ENCODE measurements at regions of chr2 and their contacts with region 1.

Region 1: DNA sequence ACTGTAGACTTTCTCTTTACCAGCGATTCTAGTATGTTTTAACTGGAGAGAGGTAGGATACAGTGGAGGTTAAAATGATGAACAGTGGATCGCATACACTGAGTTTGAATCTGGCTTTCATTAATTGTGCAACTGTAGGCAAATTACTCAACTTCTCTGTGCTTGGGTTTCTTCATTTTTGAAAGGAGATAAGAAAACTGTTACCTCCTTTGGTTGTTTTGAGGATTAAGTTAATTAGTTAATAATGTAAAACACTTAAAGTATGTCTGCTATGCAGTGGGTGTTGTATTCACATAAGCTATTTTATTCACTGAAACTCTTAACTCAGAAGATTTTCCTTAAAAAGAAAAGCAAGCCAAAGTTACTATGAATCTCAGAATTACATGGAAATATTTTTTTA is 111.8 kb upstream of the CYP20A1 start:
- DNase-seq: no peak
- H3K4me3 ChIP-seq: no peak overlapping the region
- H3K27ac ChIP-seq: no peak overlapping the region
- H3K27me3 ChIP-seq: no peaks in the 10 kb centered on the region
- CTCF ChIP-seq: no peak

Region 2: DNA sequence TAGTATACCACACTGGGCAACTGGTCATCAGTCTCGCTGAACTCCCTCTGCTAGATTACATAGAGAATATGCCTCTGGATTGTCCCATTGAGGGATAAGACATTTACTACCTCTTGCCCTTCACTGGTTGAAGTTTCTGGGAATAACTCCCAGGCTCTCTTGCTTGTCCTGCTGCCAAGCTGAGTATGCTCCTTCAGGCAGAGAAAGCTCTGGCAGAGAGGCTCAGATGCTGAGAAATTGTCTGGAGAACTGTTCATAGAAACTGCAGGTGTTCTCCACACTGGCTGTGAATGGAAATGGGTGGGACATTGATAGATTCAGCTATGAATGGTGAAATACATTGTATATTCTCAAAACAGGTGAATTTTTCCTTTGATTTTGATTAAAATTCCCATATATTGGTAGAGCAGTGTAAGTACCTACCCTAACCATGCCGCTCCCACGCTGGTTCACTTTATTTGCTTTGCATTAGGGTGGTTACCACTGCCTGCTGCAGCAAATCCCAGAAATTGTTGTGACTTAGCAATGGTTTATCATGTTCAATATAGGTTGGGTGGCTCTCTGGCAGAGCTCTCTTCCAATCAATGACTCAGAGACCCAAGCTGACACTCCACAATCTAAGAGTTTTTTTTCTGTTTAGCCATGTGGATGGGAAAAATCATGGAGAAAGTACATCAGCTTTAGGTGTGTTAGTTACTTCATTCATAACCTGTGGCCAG is 455.5 kb before region 1 on chr2:
- CTCF ChIA-PET with region 1: no interaction called
- POLR2A ChIA-PET with region 1: no interaction called
- DNase-seq: no peak
- H3K4me3 ChIP-seq: no peak overlapping the region
- H3K27ac ChIP-seq: no peak overlapping the region
- H3K27me3 ChIP-seq: no peaks in the 10 kb centered on the region
- CTCF ChIP-seq: no peak

Region 3: GRCh38 chr2:203195331-203196036 is 68.5 kb after region 1 on chr2:
- CTCF ChIA-PET with region 1: no interaction called
- POLR2A ChIA-PET with region 1: no interaction called
- DNase-seq: no peak
- H3K4me3 ChIP-seq: no peak overlapping the region
- H3K27ac ChIP-seq: no peak overlapping the region
- H3K27me3 ChIP-seq: no peaks in the 10 kb centered on the region
- CTCF ChIP-seq: no peak

Region 4: DNA sequence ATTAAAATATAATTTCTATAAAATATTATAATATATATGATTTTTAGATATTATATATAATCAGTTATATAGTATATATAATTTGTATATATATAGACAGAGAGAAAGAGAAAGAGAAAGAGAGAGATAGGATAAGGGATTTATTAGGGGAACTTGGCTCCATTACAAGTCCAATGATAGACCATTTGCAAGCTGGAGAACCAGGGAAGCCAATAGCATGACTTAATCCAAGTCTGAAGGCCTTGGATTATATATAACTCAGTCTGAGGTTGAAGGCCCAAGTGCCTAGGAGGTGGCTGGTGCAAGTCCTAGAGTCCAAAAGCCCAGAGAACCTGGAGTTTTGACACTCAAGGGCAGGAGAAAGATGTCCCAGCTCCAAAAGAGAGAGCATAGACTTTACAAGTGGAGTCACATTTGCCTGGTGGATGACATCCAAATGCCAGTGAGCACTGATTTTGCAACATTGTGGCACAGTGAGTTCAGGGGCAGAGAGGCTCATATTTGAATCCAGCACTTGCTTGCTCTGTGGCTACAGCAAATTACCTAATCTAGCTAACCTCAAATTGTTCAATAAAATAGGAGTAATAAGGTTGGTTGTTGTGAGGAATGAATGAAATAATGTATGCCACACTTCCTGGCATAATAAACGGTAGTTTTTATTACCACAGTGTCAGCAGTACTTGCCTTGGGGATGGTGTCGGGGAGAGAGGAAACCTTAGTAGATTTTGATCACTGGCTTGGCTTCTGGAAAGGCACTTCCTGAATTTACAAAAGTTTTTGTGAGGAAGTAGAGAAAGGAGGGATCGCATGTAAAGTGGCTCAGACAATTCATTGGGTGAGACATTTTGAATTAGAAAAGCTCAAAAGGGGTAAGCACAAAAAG is 509.8 kb after region 1 on chr2:
- CTCF ChIA-PET with region 1: no interaction called
- POLR2A ChIA-PET with region 1: interaction called, 12 read pairs
- DNase-seq: no peak
- H3K4me3 ChIP-seq: no peak overlapping the region
- H3K27ac ChIP-seq: no peak overlapping the region
- H3K27me3 ChIP-seq: no peaks in the 10 kb centered on the region
- CTCF ChIP-seq: no peak

Measured in AG04450 (cell line).